Activated naive CD8-positive, alpha-beta T cell treated with anti-CD3 and anti-CD28 coated beads, Interleukin-2, amount 10 ng/mL, durations not matched to agents 7 days and 5 days (primary cell): ENCODE measurements at regions of chr2 and their contacts with region 1.

Region 1: DNA sequence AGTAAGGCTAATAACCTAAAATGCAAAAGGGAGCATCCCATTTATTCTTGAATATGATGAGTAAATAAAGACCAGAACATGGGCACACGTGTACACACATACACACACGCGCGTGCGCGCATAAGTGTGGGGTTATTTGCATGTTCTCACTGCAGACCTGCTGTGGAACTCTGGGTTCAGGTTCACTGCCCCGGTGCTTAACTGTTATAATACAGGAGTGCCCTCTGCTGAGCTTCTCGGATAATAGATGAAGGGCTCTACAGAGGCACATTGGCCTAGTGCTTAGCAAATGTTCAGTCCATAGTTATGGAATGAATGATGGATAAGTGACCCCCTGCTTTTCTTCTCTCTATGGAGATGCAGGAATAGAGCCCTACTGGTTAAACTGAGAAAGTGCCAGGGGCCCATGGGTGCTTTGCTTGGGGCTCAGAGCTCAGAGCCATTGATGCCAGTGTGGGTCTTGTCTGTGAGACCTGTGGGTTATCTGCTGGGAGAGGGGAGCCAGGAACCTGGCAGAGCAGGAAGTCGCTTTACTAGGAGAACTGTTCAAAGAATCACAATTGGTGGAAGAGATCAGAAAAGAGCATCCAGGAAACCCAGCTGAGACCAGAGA is 3.6 kb upstream of the ARL4C start:
- DNase-seq: peak; percentile 63
- ATAC-seq: peak; percentile 51
- H3K4me3 Mint-ChIP-seq: no peak overlapping the region
- H3K27ac Mint-ChIP-seq: peak overlapping the region; percentile 49
- H3K4me1 Mint-ChIP-seq: peaks cover 27% of the 10 kb centered on the region
- H3K27me3 Mint-ChIP-seq: peaks cover 10% of the 10 kb centered on the region

Region 2: GRCh38 chr2:234288974-234289455 is 211.5 kb before region 1 on chr2:
- POLR2A ChIA-PET with region 1: interaction called, 273 read pairs
- DNase-seq: peak; percentile 75
- ATAC-seq: no peak
- H3K4me3 Mint-ChIP-seq: peak overlapping the region; percentile 74
- H3K27ac Mint-ChIP-seq: peak overlapping the region; percentile 97
- H3K4me1 Mint-ChIP-seq: peaks cover 70% of the 10 kb centered on the region
- H3K27me3 Mint-ChIP-seq: no peaks in the 10 kb centered on the region

Region 3: GRCh38 chr2:234368861-234369261 is 131.6 kb before region 1 on chr2:
- POLR2A ChIA-PET with region 1: interaction called, 23 read pairs
- DNase-seq: peak; percentile 53
- ATAC-seq: peak; percentile 84
- H3K4me3 Mint-ChIP-seq: peak overlapping the region; percentile 63
- H3K27ac Mint-ChIP-seq: peak overlapping the region; percentile 92
- H3K4me1 Mint-ChIP-seq: peaks cover 70% of the 10 kb centered on the region
- H3K27me3 Mint-ChIP-seq: no peaks in the 10 kb centered on the region

Region 4: GRCh38 chr2:234388554-234388953 is 111.9 kb before region 1 on chr2:
- POLR2A ChIA-PET with region 1: no interaction called
- DNase-seq: no peak
- ATAC-seq: no peak
- H3K4me3 Mint-ChIP-seq: no peak overlapping the region
- H3K27ac Mint-ChIP-seq: no peak overlapping the region
- H3K4me1 Mint-ChIP-seq: peaks cover 17% of the 10 kb centered on the region
- H3K27me3 Mint-ChIP-seq: no peaks in the 10 kb centered on the region

Region 5: GRCh38 chr2:234425619-234426603 is 74.6 kb before region 1 on chr2:
- POLR2A ChIA-PET with region 1: interaction called, 149 read pairs
- DNase-seq: peak; percentile 72
- ATAC-seq: peak; percentile 78
- H3K4me3 Mint-ChIP-seq: peak overlapping the region; percentile 83
- H3K27ac Mint-ChIP-seq: peak overlapping the region; percentile 100
- H3K4me1 Mint-ChIP-seq: peaks cover 75% of the 10 kb centered on the region
- H3K27me3 Mint-ChIP-seq: no peaks in the 10 kb centered on the region

Region 6: DNA sequence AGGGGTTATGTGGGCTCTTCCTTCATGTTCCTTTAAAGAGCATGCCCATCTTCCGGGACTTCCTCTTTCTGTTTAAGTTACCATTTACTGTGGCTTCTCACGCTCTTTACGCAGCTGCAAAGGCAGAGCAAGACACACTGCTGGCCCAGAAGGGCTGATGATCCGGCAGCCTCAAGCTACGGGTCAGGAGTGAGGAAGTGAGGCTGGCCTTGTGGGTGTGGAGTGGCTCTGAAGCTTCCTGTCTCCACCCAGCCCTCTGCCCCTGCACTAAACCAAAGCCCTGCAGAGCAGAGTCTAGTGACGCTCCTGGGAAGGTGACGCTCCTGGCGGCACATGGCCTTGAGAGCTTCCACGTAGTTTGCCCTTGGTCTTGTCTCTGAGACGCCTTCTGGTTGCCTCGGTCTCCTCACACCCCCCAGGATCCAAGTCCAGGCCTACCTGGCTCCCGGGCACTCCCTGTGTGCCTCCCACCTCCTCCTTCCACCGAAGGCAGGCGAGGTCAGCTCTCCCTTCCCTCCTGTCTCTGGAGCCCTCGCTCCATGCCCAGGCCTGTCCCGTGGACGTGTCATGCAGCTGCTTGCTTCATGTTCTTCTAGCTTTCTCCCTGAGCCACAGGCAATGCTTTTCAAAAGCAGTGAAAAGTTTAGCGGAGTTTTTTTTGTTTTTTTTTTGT is 54.0 kb before region 1 on chr2:
- POLR2A ChIA-PET with region 1: interaction called, 466 read pairs
- DNase-seq: peak; percentile 82
- ATAC-seq: peak; percentile 95
- H3K4me3 Mint-ChIP-seq: peak overlapping the region; percentile 69
- H3K27ac Mint-ChIP-seq: peak overlapping the region; percentile 98
- H3K4me1 Mint-ChIP-seq: peaks cover 69% of the 10 kb centered on the region
- H3K27me3 Mint-ChIP-seq: no peaks in the 10 kb centered on the region

Region 7: GRCh38 chr2:234483568-234484251 is 16.8 kb before region 1 on chr2:
- POLR2A ChIA-PET with region 1: interaction called, 12 read pairs
- DNase-seq: peak; percentile 79
- ATAC-seq: peak; percentile 78
- H3K4me3 Mint-ChIP-seq: peak overlapping the region; percentile 72
- H3K27ac Mint-ChIP-seq: peak overlapping the region; percentile 85
- H3K4me1 Mint-ChIP-seq: peaks cover 57% of the 10 kb centered on the region
- H3K27me3 Mint-ChIP-seq: no peaks in the 10 kb centered on the region

Region 8: DNA sequence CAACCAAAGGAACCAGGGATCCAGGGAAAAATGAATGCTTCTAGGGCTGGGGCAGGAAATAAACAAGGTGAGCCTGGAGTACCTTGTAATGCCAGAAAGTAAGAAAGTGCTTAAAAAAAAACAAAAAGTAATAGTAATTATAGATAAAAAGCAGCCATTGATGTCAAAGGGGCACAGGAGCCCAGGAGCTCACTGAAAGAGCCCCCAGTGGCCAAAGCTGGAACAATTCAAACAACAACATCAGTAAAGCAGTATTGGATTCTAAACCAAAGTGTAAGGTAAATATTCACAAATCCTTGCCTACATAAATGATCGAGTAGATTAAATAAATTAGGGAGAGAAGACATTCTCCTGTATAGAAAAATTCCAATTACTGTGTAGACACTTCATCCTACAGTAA is 110.7 kb after region 1 on chr2:
- POLR2A ChIA-PET with region 1: no interaction called
- DNase-seq: no peak
- ATAC-seq: no peak
- H3K4me3 Mint-ChIP-seq: no peak overlapping the region
- H3K27ac Mint-ChIP-seq: no peak overlapping the region
- H3K4me1 Mint-ChIP-seq: no peaks in the 10 kb centered on the region
- H3K27me3 Mint-ChIP-seq: peaks cover 3% of the 10 kb centered on the region